ENCODE measurements at regions of chr12 and their contacts with region 1.

Region 1: DNA sequence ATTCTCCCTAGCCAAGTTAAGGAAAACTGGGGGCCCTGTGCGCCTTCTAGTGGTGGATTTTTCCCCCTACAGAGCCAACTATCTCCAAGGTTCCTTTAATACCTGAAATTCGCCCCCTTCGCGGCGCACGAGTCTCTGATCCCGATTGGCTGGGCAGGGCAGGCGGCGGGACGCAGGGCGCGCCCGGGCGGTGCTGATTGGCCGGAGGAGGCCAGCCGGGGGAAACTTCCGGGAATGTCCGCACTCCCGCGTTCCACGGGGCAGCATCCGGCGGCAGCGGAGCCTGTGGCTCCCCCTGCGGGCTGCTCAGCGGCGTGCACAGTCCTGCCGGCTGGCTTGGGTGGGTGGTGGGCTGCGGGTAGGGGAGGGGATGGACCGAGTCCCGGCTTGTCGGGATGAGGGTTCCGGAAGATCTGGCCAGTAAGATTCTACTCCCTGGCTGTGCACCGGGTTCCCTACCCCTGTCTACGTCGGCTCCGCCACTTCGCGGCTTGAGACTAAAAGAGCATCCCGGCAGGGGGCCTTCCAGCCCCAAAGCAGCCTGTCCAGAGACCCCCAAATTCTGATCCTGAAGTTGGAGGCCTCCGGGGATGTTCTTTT is at the start of gene NABP2:
- DNase-seq: peak; percentile 99
- ATAC-seq: peak; percentile 87
- total RNA-seq, gene NABP2: 22.2 TPM

Region 2: GRCh38 chr12:56141946-56142784 is 82.0 kb before region 1 on chr12:
- intact Hi-C with region 1: no loop called
- DNase-seq: no peak
- ATAC-seq: no peak

Region 3: GRCh38 chr12:56189176-56189917 is 34.9 kb before region 1 on chr12 and contains the start of gene SMARCC2:
- intact Hi-C with region 1: loop called (anchors 1 kb)
- DNase-seq: peak; percentile 90
- ATAC-seq: peak; percentile 89
- total RNA-seq, gene SMARCC2: 68.8 TPM

Region 4: GRCh38 chr12:56258057-56258819 is 34.0 kb after region 1 on chr12 and contains the start of gene ANKRD52:
- intact Hi-C with region 1: loop called (anchors 5 kb)
- DNase-seq: peak; percentile 92
- ATAC-seq: peak; percentile 96
- total RNA-seq, gene ANKRD52: 23.9 TPM

Region 5: DNA sequence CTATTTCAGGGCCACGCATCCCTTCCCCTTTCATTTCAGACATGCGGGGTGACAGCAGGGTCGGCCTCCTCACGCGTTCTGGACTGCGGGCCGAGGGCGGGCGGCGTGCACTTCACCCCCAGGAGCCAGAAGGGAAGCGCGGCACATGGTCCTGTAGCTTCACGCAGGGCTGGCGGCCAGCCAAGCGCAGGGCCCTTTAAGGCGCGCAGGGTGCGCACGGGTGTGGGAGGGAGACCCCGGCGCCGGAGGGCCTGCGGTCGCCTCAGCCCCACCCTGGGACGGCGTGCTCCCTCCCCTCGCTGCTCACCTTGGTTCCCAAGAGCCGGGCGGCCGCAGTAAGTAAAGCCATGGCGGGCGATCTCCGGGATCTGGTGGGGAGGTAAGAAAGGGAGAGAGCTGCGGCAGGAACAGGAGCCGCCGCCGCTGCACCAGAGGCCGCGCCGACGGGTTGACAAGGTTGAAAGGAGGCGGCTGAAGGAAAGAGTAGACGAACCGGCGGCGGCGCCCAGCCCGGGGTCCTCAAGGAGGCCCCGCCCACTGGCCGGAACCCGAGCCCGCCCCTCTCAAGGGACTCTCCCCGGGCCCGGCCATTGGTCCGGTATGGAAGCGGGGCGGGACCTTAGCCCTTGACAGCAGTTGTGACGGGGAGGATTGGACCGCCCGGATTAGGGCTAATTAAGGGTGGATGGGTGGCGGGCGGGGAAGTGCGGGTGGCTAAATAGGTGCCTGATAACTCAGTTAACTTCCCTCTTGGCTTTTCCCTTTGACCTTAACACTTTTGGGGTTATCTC is 75.8 kb after region 1 on chr12 and contains the start of gene CS:
- intact Hi-C with region 1: loop called (anchors 1 kb)
- DNase-seq: peak; percentile 100
- ATAC-seq: peak; percentile 98
- total RNA-seq, gene CS: 799 TPM

Region 6: GRCh38 chr12:56359851-56360767 is 135.9 kb after region 1 on chr12 and contains the start of gene STAT2:
- intact Hi-C with region 1: no loop called
- DNase-seq: peak; percentile 99
- ATAC-seq: peak; percentile 99
- total RNA-seq, gene STAT2: 31.6 TPM